GM12878 (cell line): ENCODE measurements at regions of chr7 and their contacts with region 1.

Region 1: GRCh38 chr7:82481499-82482097 is 38.0 kb upstream of the CACNA2D1 start:
- DNase-seq: peak; percentile 0
- ATAC-seq: peak; percentile 86
- H3K4me3 ChIP-seq: no peak overlapping the region
- H3K27ac ChIP-seq: no peak overlapping the region
- H3K4me1 ChIP-seq: no peaks in the 10 kb centered on the region
- H3K27me3 ChIP-seq: no peaks in the 10 kb centered on the region
- CTCF ChIP-seq: peak; percentile 56 to 62 (median 56)
- EP300 ChIP-seq: no peak
- POLR2A ChIP-seq: no peak
- RAD21 ChIP-seq: peak; percentile 56

Region 2: DNA sequence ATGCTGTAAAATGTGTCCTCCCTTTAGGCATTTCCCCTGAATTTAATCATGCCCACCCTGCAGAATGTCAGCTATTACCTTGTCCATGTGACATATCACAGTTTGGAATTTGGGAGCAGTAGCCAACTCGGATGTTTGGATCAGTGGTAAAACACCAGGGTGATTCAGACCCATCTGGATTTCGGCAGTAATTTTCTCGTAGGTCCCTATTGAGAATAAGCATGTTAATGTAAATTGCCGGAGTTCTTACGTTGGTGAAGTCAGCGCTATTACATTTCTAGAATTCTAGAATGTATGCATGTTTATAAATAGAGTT is 755.8 kb before region 1 on chr7:
- CTCF ChIA-PET with region 1: no interaction called
- POLR2A ChIA-PET with region 1: no interaction called
- RAD21 ChIA-PET with region 1: no interaction called
- SMC1A ChIA-PET with region 1: no interaction called
- in situ Hi-C with region 1: no loop called
- intact Hi-C with region 1: no loop called
- DNase-seq: no peak
- ATAC-seq: no peak
- H3K4me3 ChIP-seq: no peak overlapping the region
- H3K27ac ChIP-seq: no peak overlapping the region
- H3K4me1 ChIP-seq: no peaks in the 10 kb centered on the region
- H3K27me3 ChIP-seq: no peaks in the 10 kb centered on the region
- CTCF ChIP-seq: no peak
- EP300 ChIP-seq: no peak
- POLR2A ChIP-seq: no peak
- RAD21 ChIP-seq: no peak

Region 3: DNA sequence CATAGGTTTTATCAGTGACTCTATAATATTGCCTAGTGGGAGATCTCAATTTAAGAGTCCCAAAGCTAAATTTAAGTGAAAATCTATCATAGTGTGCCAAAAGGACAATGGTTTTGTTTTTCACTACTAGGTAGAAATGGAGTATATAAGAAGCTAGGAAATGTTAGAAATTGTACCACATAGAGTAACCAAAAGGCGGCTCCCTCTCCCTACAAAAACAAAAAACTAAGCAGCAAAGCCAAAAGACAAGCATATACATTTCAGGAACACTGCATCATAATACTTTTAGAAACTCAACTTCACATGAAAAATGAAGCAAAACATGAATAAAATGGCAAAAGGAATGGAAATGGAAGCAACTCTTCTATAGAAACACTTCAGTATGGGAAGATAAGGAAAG is 309.6 kb before region 1 on chr7:
- CTCF ChIA-PET with region 1: interaction called, 6 read pairs
- POLR2A ChIA-PET with region 1: no interaction called
- RAD21 ChIA-PET with region 1: interaction called, 7 read pairs
- SMC1A ChIA-PET with region 1: interaction called, 10 read pairs
- in situ Hi-C with region 1: no loop called
- intact Hi-C with region 1: no loop called
- DNase-seq: no peak
- ATAC-seq: peak; percentile 64
- H3K4me3 ChIP-seq: no peak overlapping the region
- H3K27ac ChIP-seq: no peak overlapping the region
- H3K4me1 ChIP-seq: no peaks in the 10 kb centered on the region
- H3K27me3 ChIP-seq: no peaks in the 10 kb centered on the region
- CTCF ChIP-seq: peak in 1 of 3 experiments; percentile 5; a peak in 2 of 6 replicates
- EP300 ChIP-seq: no peak
- POLR2A ChIP-seq: no peak
- RAD21 ChIP-seq: peak; percentile 36; the same call in 1 of the 2 replicates

Region 4: DNA sequence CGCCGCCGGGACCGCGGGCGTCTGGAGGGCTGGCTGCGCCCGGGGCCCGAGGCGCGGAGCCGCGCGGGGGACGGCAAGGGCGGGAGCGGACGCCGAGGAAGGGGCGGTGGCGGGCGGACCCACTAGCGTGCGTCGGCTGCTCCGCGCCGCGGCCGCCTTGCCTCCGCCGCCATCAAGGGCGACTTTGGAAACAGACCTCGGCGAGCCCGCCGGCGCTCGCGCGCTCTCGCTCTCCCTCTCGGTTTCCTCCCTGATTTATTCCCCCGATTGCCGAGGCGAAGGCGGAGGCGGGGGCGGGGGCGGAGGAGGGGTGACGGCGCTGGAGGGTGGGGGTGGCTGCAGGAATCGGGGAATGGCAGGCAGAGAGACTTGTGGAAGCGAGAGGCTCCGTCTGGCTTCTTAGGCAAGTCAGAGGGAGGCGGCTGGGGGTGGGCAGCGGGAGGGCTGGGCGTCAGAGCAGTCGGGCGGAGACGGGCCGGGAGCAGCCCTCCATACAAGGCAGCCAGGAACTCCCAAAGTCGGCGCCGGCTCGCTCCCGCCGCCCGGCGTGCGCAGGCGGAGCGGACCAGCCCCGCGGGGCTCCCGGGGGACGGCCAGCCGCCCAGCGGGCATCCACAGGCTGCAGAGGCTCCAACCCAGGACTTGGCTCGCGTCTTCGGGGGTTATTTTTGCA is 37.9 kb before region 1 on chr7 and contains the start of gene CACNA2D1:
- CTCF ChIA-PET with region 1: interaction called, 21 read pairs
- POLR2A ChIA-PET with region 1: no interaction called
- RAD21 ChIA-PET with region 1: interaction called, 12 read pairs
- SMC1A ChIA-PET with region 1: interaction called, 26 read pairs
- in situ Hi-C with region 1: no loop called
- intact Hi-C with region 1: loop called (anchors 2 kb)
- DNase-seq: no peak
- ATAC-seq: peak; percentile 62
- H3K4me3 ChIP-seq: no peak within 1 kb of the TSS
- H3K27ac ChIP-seq: no peak within 1 kb of the TSS
- H3K4me1 ChIP-seq: no peaks in the 10 kb centered on the region
- H3K27me3 ChIP-seq: peaks cover 5 to 11% of the 10 kb centered on the region in 2 experiments
- CTCF ChIP-seq: no peak; a peak in 1 of 6 replicates
- EP300 ChIP-seq: no peak
- POLR2A ChIP-seq: no peak
- RAD21 ChIP-seq: no peak
- polyA plus RNA-seq, gene CACNA2D1: 0.14 to 0.15 TPM

Region 5: DNA sequence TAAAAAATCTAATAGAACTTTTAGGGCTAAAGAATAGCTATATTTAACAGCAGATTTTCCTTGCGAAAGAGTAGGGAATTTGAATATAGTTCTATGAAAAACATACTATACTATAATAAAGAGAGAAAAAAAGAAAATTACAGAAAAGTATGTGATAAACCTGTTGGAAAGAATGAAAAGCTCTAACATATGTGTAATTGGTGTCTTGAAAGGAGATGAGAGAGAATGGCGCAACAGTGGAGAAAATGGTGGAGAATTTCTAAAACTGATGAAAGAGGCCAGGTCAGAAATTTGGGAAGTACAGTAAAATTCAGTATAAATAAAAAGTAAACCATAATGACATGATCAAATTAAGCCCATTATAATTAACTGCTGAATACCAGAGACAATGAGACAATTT is 17.2 kb before region 1 on chr7:
- CTCF ChIA-PET with region 1: interaction called, 10 read pairs
- POLR2A ChIA-PET with region 1: no interaction called
- RAD21 ChIA-PET with region 1: interaction called, 11 read pairs
- SMC1A ChIA-PET with region 1: interaction called, 7 read pairs
- in situ Hi-C with region 1: no loop called
- intact Hi-C with region 1: no loop called
- DNase-seq: no peak
- ATAC-seq: no peak
- H3K4me3 ChIP-seq: no peak overlapping the region
- H3K27ac ChIP-seq: no peak overlapping the region
- H3K4me1 ChIP-seq: no peaks in the 10 kb centered on the region
- H3K27me3 ChIP-seq: no peaks in the 10 kb centered on the region
- CTCF ChIP-seq: no peak
- EP300 ChIP-seq: no peak
- POLR2A ChIP-seq: no peak
- RAD21 ChIP-seq: no peak

Region 6: GRCh38 chr7:82729172-82730030 is 247.8 kb after region 1 on chr7:
- CTCF ChIA-PET with region 1: interaction called, 4 read pairs
- POLR2A ChIA-PET with region 1: no interaction called
- RAD21 ChIA-PET with region 1: no interaction called
- SMC1A ChIA-PET with region 1: interaction called, 4 read pairs
- in situ Hi-C with region 1: no loop called
- intact Hi-C with region 1: loop called (anchors 10 kb)
- DNase-seq: no peak
- ATAC-seq: peak; percentile 56; the same call in 2 of the 3 replicates
- H3K4me3 ChIP-seq: no peak overlapping the region
- H3K27ac ChIP-seq: no peak overlapping the region
- H3K4me1 ChIP-seq: no peaks in the 10 kb centered on the region
- H3K27me3 ChIP-seq: no peaks in the 10 kb centered on the region
- CTCF ChIP-seq: peak; percentile 55 to 72 (median 56)
- EP300 ChIP-seq: no peak
- POLR2A ChIP-seq: no peak
- RAD21 ChIP-seq: peak; percentile 80